HCT116 (cell line): ENCODE measurements at regions of chr12 and their contacts with region 1.

Region 1: DNA sequence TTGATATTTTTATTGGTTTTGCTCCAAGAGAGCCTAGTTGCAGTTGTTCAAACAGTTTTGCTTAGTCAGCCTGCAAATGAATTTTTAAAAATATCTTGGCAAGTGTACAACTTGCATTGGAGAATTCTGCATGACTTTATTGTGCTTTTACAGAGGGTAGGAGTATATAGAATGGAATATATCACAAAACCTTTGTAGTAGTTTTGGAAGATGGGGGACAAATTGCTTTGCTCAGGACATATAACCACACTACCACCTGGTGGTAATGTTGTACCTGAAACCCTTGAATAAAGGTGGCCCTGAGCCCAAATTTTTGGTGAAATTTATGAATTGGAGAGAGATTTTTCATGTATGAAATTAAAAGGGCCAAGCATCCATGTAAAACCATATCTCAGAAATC is 645.2 kb downstream of the MED13L start:
- DNase-seq: no peak
- ATAC-seq: no peak
- H3K4me3 ChIP-seq: no peak overlapping the region
- H3K27ac ChIP-seq: no peak overlapping the region
- H3K4me1 ChIP-seq: no peaks in the 10 kb centered on the region
- H3K27me3 ChIP-seq: no peaks in the 10 kb centered on the region
- CTCF ChIP-seq: peak; percentile 12 to 48 (median 47); a peak in 3 of 6 replicates
- POLR2A ChIP-seq: no peak
- RAD21 ChIP-seq: peak; percentile 70

Region 2: GRCh38 chr12:115473257-115473956 is 158.9 kb before region 1 on chr12:
- CTCF ChIA-PET with region 1: no interaction called
- POLR2A ChIA-PET with region 1: no interaction called
- RAD21 ChIA-PET with region 1: no interaction called
- intact Hi-C with region 1: loop called (anchors 5 kb)
- DNase-seq: no peak
- ATAC-seq: no peak
- H3K4me3 ChIP-seq: no peak overlapping the region
- H3K27ac ChIP-seq: peak overlapping the region; percentile 45
- H3K4me1 ChIP-seq: peaks cover 18 to 34% of the 10 kb centered on the region in 2 experiments; a peak in 3 of 4 replicates
- H3K27me3 ChIP-seq: no peaks in the 10 kb centered on the region
- CTCF ChIP-seq: no peak
- POLR2A ChIP-seq: no peak
- RAD21 ChIP-seq: no peak